ENCODE measurements at regions of chr22 and their contacts with region 1.

Region 1: DNA sequence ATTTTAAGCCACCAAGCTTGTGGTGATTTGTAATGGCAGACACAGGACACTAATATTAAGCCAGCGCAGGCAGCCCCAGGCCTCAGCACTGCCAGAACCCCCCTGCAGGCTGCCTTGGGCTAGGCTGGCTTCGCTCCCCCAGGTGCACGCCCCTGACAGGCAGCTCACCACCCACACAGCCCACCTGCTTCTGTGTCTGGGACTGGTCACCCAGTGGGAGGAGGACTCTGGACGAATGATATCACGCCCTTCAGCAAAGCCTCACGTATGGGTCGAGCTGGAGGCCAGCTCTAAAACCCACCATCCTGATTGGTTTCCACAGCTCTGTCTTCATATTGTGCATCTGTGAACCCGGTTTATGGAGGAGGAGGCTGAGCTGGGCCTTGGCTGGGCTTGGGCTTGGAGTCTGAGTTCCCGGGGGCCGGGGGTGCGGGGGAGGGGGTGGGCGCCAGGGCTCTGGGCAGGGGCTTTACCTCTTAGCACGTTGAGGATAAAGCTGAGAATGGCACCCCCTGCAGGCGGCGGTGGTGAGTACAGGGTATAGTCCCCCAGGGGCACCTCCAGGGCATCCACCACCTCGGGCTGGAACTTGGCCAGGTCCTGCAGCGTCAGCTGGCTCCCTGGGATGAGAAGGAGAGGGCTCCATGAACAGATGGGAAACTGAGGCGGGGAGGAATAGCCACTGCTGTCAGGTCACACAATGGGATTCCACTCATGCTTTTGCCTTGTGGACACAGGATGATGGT is 13.8 kb downstream of the GGT5 start:
- DNase-seq: no peak
- ATAC-seq: peak; percentile 95
- H3K4me3 ChIP-seq: no peak overlapping the region
- H3K27ac ChIP-seq: no peak overlapping the region
- H3K4me1 ChIP-seq: no peaks in the 10 kb centered on the region
- H3K27me3 ChIP-seq: no peaks in the 10 kb centered on the region
- CTCF ChIP-seq: peak; percentile 46 to 64 (median 56); a peak in 5 of 6 replicates
- EP300 ChIP-seq: no peak
- POLR2A ChIP-seq: no peak
- RAD21 ChIP-seq: peak; percentile 40

Region 2: GRCh38 chr22:24189249-24190158 is 41.6 kb before region 1 on chr22:
- CTCF ChIA-PET with region 1: interaction called, 27 read pairs
- POLR2A ChIA-PET with region 1: interaction called, 3 read pairs
- RAD21 ChIA-PET with region 1: interaction called, 13 read pairs
- SMC1A ChIA-PET with region 1: interaction called, 16 read pairs
- in situ Hi-C with region 1: no loop called
- intact Hi-C with region 1: no loop called
- DNase-seq: no peak
- ATAC-seq: peak; percentile 95
- H3K4me3 ChIP-seq: no peak overlapping the region
- H3K27ac ChIP-seq: no peak overlapping the region
- H3K4me1 ChIP-seq: no peaks in the 10 kb centered on the region
- H3K27me3 ChIP-seq: no peaks in the 10 kb centered on the region
- CTCF ChIP-seq: peak; percentile 81 to 89 (median 87)
- EP300 ChIP-seq: no peak
- POLR2A ChIP-seq: no peak
- RAD21 ChIP-seq: peak; percentile 86

Region 3: GRCh38 chr22:24198682-24199052 is 32.4 kb before region 1 on chr22:
- CTCF ChIA-PET with region 1: interaction called, 11 read pairs
- POLR2A ChIA-PET with region 1: no interaction called
- RAD21 ChIA-PET with region 1: no interaction called
- SMC1A ChIA-PET with region 1: interaction called, 4 read pairs
- in situ Hi-C with region 1: loop called (anchors 5 kb)
- intact Hi-C with region 1: no loop called
- DNase-seq: no peak
- ATAC-seq: no peak
- H3K4me3 ChIP-seq: no peak overlapping the region
- H3K27ac ChIP-seq: no peak overlapping the region
- H3K4me1 ChIP-seq: peaks cover 3% of the 10 kb centered on the region
- H3K27me3 ChIP-seq: no peaks in the 10 kb centered on the region
- CTCF ChIP-seq: no peak
- EP300 ChIP-seq: no peak
- POLR2A ChIP-seq: no peak
- RAD21 ChIP-seq: no peak

Region 4: GRCh38 chr22:24216541-24217209 is 14.4 kb before region 1 on chr22:
- CTCF ChIA-PET with region 1: interaction called, 18 read pairs
- POLR2A ChIA-PET with region 1: no interaction called
- RAD21 ChIA-PET with region 1: interaction called, 3 read pairs
- SMC1A ChIA-PET with region 1: no interaction called
- in situ Hi-C with region 1: no loop called
- intact Hi-C with region 1: no loop called
- DNase-seq: peak; percentile 7
- ATAC-seq: peak; percentile 61
- H3K4me3 ChIP-seq: no peak overlapping the region
- H3K27ac ChIP-seq: no peak overlapping the region
- H3K4me1 ChIP-seq: peaks cover 4% of the 10 kb centered on the region; the same call in 1 of the 2 replicates
- H3K27me3 ChIP-seq: no peaks in the 10 kb centered on the region; a peak in 1 of 4 replicates
- CTCF ChIP-seq: no peak
- EP300 ChIP-seq: no peak
- POLR2A ChIP-seq: no peak
- RAD21 ChIP-seq: no peak

Region 5: GRCh38 chr22:24265734-24266133 is 34.6 kb after region 1 on chr22:
- CTCF ChIA-PET with region 1: no interaction called
- POLR2A ChIA-PET with region 1: no interaction called
- RAD21 ChIA-PET with region 1: no interaction called
- SMC1A ChIA-PET with region 1: no interaction called
- in situ Hi-C with region 1: no loop called
- intact Hi-C with region 1: no loop called
- DNase-seq: no peak
- ATAC-seq: no peak
- H3K4me3 ChIP-seq: no peak overlapping the region
- H3K27ac ChIP-seq: no peak overlapping the region
- H3K4me1 ChIP-seq: peaks cover 4% of the 10 kb centered on the region; the same call in 1 of the 2 replicates
- H3K27me3 ChIP-seq: no peaks in the 10 kb centered on the region
- CTCF ChIP-seq: no peak
- EP300 ChIP-seq: no peak
- POLR2A ChIP-seq: no peak
- RAD21 ChIP-seq: no peak